CD4-positive, alpha-beta memory T cell (primary cell): ENCODE measurements at regions of chr17 and their contacts with region 1.

Region 1: DNA sequence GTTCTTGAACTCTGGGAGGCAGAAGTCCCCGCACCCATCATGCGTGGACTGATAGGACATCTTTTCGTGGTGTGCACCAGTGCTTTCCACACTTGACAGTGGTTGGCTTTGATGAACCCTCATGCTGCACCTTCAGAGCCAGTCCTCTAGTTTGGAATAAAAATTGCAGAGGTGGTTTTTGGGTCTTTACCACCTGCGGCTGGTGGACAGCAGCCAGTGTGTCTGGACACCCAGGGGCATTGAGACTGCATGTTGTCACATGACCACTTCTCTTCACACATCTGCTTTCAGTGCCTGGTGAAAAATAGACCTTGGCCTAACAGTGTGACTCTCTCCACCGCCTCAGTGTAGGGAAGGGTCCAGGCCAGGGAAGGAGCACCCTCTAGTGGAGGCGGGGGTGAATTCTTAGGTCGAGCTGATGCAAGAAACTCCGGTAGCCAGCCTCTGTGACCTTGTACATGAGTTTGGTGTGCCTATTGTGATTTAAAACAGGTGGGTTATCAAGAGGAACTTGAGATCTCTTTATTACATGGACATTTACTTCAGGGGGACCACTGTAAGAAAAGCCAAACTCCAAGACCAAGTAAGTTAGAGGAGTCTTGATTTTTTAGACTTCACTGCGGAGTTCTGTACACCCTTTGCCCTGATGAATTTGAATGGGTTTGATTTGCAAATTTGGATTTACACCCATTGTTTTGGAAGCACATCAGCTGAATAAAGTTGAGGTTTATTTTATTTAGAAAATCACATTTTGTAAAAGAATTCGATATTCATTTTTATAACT is 17.9 kb downstream of the GOSR2 start:
- DNase-seq: peak; percentile 45 to 63 (median 57)
- H3K4me3 ChIP-seq: no peak overlapping the region
- H3K4me3 Mint-ChIP-seq: no peak overlapping the region
- H3K27ac ChIP-seq: no peak overlapping the region
- H3K27ac Mint-ChIP-seq: peak overlapping the region in 5 of 7 donors; percentile 23 to 68 (median 42)
- H3K4me1 ChIP-seq: peaks cover 17% of the 10 kb centered on the region
- H3K4me1 Mint-ChIP-seq: peaks cover 9 to 23% (median 17%) of the 10 kb centered on the region in 4 donors
- H3K27me3 ChIP-seq: no peaks in the 10 kb centered on the region
- H3K27me3 Mint-ChIP-seq: no peaks in the 10 kb centered on the region

Region 2: GRCh38 chr17:46841561-46842379 is 99.0 kb before region 1 on chr17:
- CTCF ChIA-PET with region 1: interaction called, 9 read pairs
- POLR2A ChIA-PET with region 1: interaction called, 3 read pairs
- intact Hi-C with region 1: loop called (anchors 1 kb)
- DNase-seq: no peak
- H3K4me3 ChIP-seq: no peak overlapping the region
- H3K4me3 Mint-ChIP-seq: no peak overlapping the region
- H3K27ac ChIP-seq: no peak overlapping the region
- H3K27ac Mint-ChIP-seq: no peak overlapping the region
- H3K4me1 ChIP-seq: no peaks in the 10 kb centered on the region
- H3K4me1 Mint-ChIP-seq: peaks cover 0 to 5% (median under 1%) of the 10 kb centered on the region in 4 donors
- H3K27me3 ChIP-seq: peaks cover 9% of the 10 kb centered on the region
- H3K27me3 Mint-ChIP-seq: peaks cover 30 to 37% of the 10 kb centered on the region in 2 donors

Region 3: DNA sequence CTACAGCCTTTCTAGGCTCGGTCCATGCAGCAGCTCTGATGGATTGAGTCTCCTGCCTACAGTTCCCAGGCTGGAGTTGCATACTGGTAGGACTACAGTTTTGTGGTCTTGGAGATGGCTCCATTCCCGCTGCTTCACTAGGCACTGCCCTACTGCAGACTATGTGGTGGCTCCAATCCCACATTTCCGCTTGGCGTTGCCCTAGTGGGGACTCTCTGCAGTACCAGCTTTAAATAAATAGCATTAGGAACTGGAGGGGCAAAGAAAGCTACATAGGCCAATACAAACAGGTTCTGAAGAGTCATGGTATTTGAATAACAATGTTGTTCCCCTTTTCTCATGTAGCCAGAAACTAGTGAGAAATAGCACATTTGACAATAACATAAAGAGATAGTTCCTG is 23.3 kb before region 1 on chr17:
- CTCF ChIA-PET with region 1: interaction called, 16 read pairs
- POLR2A ChIA-PET with region 1: no interaction called
- intact Hi-C with region 1: no loop called
- DNase-seq: no peak
- H3K4me3 ChIP-seq: no peak overlapping the region
- H3K4me3 Mint-ChIP-seq: no peak overlapping the region
- H3K27ac ChIP-seq: no peak overlapping the region
- H3K27ac Mint-ChIP-seq: no peak overlapping the region
- H3K4me1 ChIP-seq: no peaks in the 10 kb centered on the region
- H3K4me1 Mint-ChIP-seq: peaks cover 2 to 7% (median 5%) of the 10 kb centered on the region in 4 donors
- H3K27me3 ChIP-seq: no peaks in the 10 kb centered on the region
- H3K27me3 Mint-ChIP-seq: peaks cover 1 to 5% of the 10 kb centered on the region in 2 donors

Region 4: GRCh38 chr17:46995841-46996571 is 55.2 kb after region 1 on chr17:
- CTCF ChIA-PET with region 1: interaction called, 14 read pairs
- POLR2A ChIA-PET with region 1: no interaction called
- intact Hi-C with region 1: no loop called
- DNase-seq: no peak
- H3K4me3 ChIP-seq: no peak overlapping the region
- H3K4me3 Mint-ChIP-seq: no peak overlapping the region
- H3K27ac ChIP-seq: no peak overlapping the region
- H3K27ac Mint-ChIP-seq: peak overlapping the region in 1 of 7 donors; percentile 73
- H3K4me1 ChIP-seq: peaks cover 3% of the 10 kb centered on the region
- H3K4me1 Mint-ChIP-seq: peaks cover 0 to under 1% (median under 1%) of the 10 kb centered on the region in 4 donors
- H3K27me3 ChIP-seq: no peaks in the 10 kb centered on the region
- H3K27me3 Mint-ChIP-seq: no peaks in the 10 kb centered on the region

Region 5: DNA sequence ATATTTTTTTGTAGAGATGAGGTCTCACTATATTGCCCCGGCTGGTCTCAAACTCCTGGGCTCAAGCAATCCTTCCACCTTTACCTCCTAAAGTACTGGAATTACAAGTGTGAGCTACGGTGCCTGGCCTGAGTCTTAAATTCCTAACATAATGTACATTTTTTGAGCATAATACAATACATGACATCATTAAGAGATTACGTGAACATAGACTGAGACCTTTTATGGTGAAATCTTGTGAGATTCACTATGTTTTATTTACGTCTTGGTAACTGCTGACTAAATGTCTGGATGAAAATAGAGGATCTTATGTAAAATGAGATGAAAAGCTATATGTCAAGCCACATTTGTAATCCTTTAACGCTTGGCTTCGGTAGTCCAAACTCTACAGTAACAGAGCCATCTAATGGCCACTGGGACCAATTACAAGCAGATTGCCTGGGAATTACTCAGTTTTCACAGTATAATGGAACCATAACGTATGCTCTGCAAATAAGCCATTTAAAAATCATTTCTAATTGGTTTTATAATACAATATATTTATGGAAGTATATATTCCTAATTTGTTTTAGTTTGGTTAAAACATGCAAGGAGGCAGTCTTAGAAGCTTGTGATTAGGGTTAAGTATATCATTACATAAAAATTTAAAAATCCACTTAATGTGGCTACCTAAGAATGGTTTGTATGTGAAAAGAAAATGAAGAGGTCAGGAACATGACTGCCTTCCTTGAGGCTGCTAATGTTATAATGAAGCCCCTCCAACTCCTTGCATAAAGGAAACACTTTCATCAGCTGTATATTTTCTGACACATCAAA is 374.8 kb after region 1 on chr17:
- CTCF ChIA-PET with region 1: interaction called, 16 read pairs
- POLR2A ChIA-PET with region 1: no interaction called
- intact Hi-C with region 1: no loop called
- DNase-seq: peak in 4 of 5 donors; percentile 50 to 56 (median 52)
- H3K4me3 ChIP-seq: no peak overlapping the region
- H3K4me3 Mint-ChIP-seq: no peak overlapping the region
- H3K27ac ChIP-seq: no peak overlapping the region
- H3K27ac Mint-ChIP-seq: no peak overlapping the region
- H3K4me1 ChIP-seq: no peaks in the 10 kb centered on the region
- H3K4me1 Mint-ChIP-seq: no peaks in the 10 kb centered on the region
- H3K27me3 ChIP-seq: no peaks in the 10 kb centered on the region
- H3K27me3 Mint-ChIP-seq: peaks cover 0 to 1% of the 10 kb centered on the region in 2 donors

Region 6: DNA sequence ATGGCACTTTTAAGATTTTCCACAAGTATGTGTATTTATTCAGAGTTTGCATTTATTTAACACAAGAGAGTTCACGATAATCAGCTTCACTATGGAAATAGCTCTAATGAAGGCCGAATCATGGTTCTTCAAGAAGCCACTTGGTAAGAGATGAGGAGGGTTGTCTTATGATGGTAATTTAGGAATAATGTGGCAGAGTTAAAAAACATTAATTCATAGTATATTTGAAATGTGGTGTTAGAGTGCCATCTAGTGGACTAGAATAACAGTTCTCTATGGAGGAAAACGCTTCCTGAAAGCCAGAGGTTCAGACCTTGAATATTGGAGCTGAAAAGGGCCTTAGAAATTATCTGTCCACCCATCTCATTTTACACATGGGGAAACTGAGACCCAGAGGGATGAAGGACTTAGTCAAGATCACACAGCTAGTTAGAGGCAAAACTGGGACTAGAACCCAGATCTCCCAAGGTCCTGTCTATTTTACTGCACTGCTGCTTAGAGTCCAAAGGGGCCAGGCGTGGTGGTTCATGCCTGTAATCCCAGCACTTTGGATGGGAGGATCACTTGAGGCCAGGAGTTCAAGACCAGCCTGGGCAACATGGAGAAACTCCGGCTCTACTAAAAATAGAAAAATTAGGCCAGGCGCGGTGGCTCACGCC is 675.1 kb after region 1 on chr17:
- CTCF ChIA-PET with region 1: interaction called, 3 read pairs
- POLR2A ChIA-PET with region 1: no interaction called
- intact Hi-C with region 1: loop called (anchors 2 kb)
- DNase-seq: peak in 4 of 5 donors; percentile 45 to 54 (median 50)
- H3K4me3 ChIP-seq: no peak overlapping the region
- H3K4me3 Mint-ChIP-seq: no peak overlapping the region
- H3K27ac ChIP-seq: no peak overlapping the region
- H3K27ac Mint-ChIP-seq: peak overlapping the region in 5 of 7 donors; percentile 22 to 80 (median 63)
- H3K4me1 ChIP-seq: no peaks in the 10 kb centered on the region
- H3K4me1 Mint-ChIP-seq: peaks cover 0 to 6% (median 4%) of the 10 kb centered on the region in 4 donors
- H3K27me3 ChIP-seq: no peaks in the 10 kb centered on the region
- H3K27me3 Mint-ChIP-seq: no peaks in the 10 kb centered on the region

Region 7: GRCh38 chr17:47687748-47688147 is 746.9 kb after region 1 on chr17:
- CTCF ChIA-PET with region 1: no interaction called
- POLR2A ChIA-PET with region 1: no interaction called
- intact Hi-C with region 1: no loop called
- DNase-seq: no peak
- H3K4me3 ChIP-seq: no peak overlapping the region
- H3K4me3 Mint-ChIP-seq: no peak overlapping the region
- H3K27ac ChIP-seq: no peak overlapping the region
- H3K27ac Mint-ChIP-seq: no peak overlapping the region
- H3K4me1 ChIP-seq: peaks cover 9% of the 10 kb centered on the region
- H3K4me1 Mint-ChIP-seq: peaks cover 2 to 26% (median 13%) of the 10 kb centered on the region in 4 donors
- H3K27me3 ChIP-seq: no peaks in the 10 kb centered on the region
- H3K27me3 Mint-ChIP-seq: no peaks in the 10 kb centered on the region